ENCODE measurements at regions of chrX and their contacts with region 1.

Region 1: GRCh38 chrX:110167952-110168451 is 149.9 kb downstream of the AMMECR1 start:
- DNase-seq: no peak
- H3K4me3 ChIP-seq: no peak overlapping the region
- H3K27ac ChIP-seq: no peak overlapping the region
- H3K4me1 ChIP-seq: no peaks in the 10 kb centered on the region
- H3K27me3 ChIP-seq: no peaks in the 10 kb centered on the region
- CTCF ChIP-seq: peak; percentile 52

Region 2: GRCh38 chrX:109830704-109831206 is 337.2 kb before region 1 on chrX:
- intact Hi-C with region 1: no loop called
- DNase-seq: no peak
- H3K4me3 ChIP-seq: no peak overlapping the region
- H3K27ac ChIP-seq: no peak overlapping the region
- H3K4me1 ChIP-seq: no peaks in the 10 kb centered on the region
- H3K27me3 ChIP-seq: no peaks in the 10 kb centered on the region
- CTCF ChIP-seq: no peak

Region 3: DNA sequence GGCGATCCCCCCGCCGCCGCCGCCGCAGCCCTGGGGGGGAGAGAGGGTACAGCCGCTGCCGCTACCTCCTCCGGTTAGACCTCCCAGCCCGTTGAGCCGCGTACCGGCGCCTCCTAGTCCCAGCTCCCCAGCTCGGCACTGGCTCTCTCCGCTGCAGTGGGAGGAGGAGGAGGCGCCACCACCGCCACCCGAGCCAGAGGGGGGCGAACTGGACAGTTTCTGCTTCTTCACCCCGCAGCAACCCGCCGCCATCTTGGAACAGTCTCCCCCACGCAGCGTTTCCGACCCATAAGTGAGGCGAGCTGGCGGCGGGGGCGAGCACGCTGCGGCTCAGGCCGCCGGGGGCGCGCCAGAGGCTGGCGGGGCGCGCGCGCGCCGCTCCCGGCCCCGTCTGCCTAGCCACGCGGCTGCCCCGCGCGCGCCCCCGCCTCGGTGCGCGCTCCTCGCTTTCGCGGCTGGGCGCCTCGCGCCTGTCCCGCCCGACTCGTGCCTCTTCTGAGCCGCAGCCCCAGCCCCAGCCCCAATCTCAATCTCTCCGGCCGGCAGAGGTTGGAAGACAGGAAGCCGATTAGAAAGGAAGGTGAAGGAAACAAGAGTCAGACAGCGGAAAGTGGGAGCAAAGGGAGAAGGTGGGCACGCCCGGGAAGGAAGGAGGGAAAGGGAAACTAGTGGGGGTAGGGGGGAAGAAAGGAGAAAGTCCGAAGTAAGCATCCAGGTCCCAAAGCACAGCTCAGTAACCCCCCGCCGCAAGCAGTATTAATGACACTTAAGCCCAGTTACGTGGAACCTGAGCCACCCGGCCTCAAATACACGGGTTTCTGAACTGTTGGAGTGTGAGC is 150.0 kb after region 1 on chrX and contains the start of gene AMMECR1:
- intact Hi-C with region 1: loop called (anchors 10 kb)
- DNase-seq: peak; percentile 74
- H3K4me3 ChIP-seq: peak within 1 kb of the TSS; percentile 60
- H3K27ac ChIP-seq: peak within 1 kb of the TSS; percentile 58
- H3K4me1 ChIP-seq: no peaks in the 10 kb centered on the region
- H3K27me3 ChIP-seq: no peaks in the 10 kb centered on the region
- CTCF ChIP-seq: no peak
- total RNA-seq, gene AMMECR1: 10.4 to 14.4 TPM

Region 4: DNA sequence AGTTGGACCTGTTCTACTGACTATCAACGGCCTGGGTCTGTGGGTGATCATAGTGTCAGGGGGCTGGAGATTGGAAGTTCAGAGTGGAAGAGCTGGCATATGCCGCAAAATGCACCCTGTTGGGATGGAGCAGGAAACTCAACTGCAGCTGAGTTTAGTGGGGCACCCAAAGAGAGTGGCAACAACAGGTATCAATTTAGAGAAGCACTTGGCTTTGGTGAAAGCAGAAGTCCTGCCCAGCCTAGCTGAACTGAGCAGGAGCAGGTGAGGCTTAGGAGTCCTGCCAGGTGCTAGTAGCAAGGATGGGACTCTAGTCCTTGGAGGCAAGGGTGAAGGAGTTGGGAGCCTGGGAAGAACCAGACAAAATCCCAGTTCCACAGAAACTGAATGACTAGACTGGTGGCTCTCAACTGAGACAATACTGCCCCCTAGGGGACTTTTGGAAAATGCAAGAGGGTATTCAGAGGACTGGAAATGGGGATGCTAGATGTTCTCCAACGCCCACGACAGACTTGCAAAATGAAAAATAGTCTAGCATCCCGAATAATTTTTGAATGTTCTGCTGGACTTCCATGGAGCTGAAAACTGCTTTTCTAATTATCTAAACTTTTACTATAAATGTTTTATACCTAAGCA is 240.0 kb after region 1 on chrX:
- intact Hi-C with region 1: loop called (anchors 2 kb)
- DNase-seq: peak; percentile 75
- H3K4me3 ChIP-seq: no peak overlapping the region
- H3K27ac ChIP-seq: no peak overlapping the region
- H3K4me1 ChIP-seq: no peaks in the 10 kb centered on the region
- H3K27me3 ChIP-seq: no peaks in the 10 kb centered on the region
- CTCF ChIP-seq: peak; percentile 75